Right ventricle myocardium superior (tissue), 1 donor: ENCODE measurements at regions of chr19 and their contacts with region 1.

Region 1: DNA sequence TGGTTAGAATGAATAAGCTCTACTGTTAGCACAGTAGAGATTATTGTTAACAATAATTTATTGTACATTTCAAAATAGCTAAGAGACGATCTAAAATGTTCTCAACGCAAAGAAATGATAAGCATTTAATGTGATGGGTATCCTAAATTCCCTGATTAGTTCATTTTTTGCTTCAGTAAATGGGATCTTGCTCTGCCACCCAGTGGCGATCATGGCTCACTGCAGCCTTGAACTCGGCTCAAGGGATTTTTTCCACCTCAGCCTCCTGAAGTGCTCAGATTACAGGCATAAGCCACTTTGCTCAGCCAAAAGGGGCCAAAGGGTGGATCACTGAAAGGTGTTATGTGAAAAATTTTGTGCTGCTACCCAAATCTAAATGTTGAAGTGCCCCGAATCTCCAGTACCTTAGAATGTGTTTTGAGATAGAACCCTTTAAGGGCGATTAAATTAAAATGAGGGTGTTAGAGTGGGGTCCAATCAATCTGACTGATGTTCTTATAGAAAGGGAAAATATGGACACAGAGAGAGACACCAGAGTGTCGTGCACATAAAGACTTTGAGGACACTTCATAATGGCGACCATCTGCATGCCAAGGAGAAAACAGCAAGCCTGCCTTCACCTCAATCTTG is 31.5 kb upstream of the ZNF766 start:
- DNase-seq: peak; percentile 60
- ATAC-seq: peak; percentile 78

Region 2: DNA sequence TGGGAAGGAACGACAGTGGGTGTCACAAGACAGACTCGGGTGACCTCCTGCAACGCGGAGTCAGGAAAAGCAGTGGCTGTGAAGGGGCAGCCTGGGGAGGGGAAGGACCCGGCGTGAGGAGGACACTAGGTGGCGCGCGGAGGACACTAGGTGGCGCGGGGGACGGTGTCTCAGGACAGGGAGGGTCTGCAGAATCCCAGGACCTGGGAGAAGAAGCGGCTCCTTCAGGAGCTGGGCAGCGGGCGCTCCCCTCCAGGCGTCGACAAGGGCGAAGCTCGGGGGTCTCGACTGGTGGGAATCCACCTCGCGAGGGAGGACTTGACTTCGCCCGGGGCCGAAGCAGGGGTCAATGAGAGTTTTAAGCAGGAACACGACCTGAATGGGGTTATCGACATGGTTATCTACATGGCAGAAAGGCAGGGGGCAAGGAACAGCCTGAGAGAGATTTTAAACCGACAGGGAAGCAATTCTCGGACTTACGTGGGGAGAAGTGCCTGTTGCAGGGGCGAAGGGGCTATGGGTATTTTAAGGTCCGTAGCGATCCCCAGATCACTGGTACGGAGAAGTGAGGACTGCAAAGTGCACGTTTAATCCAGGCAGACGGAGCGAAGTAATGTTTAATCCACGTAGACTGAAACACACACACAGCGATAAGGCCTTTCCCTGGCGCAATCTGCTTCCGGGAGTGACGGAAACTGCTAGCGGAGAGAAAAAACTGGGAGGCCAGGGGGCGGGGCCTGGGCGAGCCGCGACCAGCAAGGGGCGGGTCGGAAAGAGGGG is 98.4 kb before region 1 on chr19 and contains the start of gene ZNF616:
- intact Hi-C with region 1: loop called (anchors 2 kb)
- DNase-seq: peak; percentile 97
- ATAC-seq: peak; percentile 99
- total RNA-seq, gene ZNF616: 4.8 TPM